Gastrocnemius medialis (tissue), 4 donors: ENCODE measurements at regions of chr12 and their contacts with region 1.

Region 1: DNA sequence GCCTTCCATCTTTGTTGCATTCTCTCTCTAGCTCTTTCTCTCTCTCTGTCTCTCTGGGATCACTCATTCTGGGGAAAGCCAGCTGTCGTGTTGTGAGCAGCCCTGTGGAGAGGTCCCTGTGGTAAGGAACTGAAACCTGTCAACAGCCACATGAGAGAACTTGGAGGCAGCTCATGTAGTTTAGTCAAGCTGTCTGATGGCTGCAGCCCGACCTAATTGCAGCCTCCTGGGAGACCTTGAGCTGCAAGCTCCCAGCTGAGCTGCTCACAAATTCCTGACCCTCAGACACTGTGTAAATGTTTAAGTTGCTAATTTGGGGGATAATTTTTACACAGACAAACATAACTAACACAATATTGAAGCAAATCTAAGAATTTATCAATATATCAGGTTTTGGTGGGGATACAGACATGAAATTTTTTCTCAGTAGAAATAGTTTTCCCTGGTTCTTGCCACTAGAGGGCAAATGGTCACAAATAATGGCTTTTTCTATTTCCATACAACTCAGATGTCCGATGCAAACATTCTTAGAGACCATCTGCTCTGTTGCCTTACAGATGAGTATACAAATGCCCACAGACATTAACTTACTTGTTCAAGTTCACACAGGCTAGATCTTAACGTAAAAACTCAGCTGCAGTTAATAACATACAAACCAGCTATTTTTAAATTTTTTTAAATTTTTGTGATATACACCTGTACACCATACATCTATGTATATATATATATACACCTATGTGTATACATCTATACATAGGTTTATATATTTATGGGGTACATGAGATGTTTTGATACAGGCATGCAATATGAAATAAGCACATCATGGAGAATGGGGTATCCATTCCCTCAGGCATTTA is 15.5 kb upstream of the KRR1 start:
- DNase-seq: no peak
- ATAC-seq: no peak
- H3K4me3 ChIP-seq: no peak overlapping the region
- H3K27ac ChIP-seq: no peak overlapping the region
- H3K4me1 ChIP-seq: no peaks in the 10 kb centered on the region
- H3K27me3 ChIP-seq: no peaks in the 10 kb centered on the region
- CTCF ChIP-seq: peak; percentile 25 to 61 (median 46)
- POLR2A ChIP-seq: no peak

Region 2: DNA sequence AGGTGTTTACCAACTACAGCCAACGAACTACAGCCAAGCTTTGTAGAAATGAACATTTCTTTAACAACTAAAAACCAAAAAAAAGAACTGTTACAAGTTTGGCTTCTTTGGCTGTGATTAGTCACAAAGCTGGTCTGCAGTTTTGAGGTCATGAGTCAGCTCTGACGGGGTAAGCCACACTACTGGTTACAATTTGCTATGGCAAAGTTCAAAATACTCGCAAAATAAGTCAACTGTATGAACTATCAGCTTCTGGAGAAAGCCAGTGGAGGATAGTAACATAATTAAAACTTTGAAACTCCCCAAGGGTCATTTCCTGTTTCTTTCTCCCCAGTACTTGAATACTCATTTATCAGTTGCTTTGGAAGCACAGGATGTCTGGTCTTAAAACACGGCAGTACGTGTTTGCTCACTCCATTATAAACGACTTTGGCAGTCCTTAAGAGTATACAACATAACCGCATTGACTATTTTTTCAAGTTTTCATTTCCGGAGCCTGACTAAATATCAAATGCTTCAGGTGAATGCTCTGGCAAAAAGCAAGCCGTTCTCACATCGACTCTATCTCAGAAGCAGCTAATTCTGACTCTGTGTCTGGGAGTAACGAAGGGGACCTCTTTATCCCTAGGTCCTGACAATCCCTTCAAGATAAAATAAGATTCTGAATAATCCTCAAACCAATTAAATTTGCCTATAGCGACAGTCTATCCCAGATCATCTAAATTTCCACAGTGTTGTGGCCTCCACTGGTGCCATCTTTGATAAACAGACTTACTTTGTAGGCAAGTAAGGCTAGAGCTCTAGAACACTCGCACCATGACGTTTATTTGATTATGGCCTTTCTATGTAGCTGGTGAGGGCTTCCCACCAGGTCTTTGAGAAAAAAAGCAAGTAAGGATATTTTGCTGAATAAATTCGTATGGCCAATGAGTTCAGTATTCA is 494.1 kb after region 1 on chr12:
- in situ Hi-C with region 1: loop called in 2 of 4 experiments (anchors 10 to 25 kb)
- intact Hi-C with region 1: no loop called
- DNase-seq: no peak
- ATAC-seq: peak; percentile 34 to 39
- H3K4me3 ChIP-seq: no peak overlapping the region
- H3K27ac ChIP-seq: peak overlapping the region in 1 of 4 donors; percentile 25
- H3K4me1 ChIP-seq: no peaks in the 10 kb centered on the region
- H3K27me3 ChIP-seq: no peaks in the 10 kb centered on the region
- CTCF ChIP-seq: no peak
- POLR2A ChIP-seq: no peak

Region 3: GRCh38 chr12:76037130-76038103 is 510.5 kb after region 1 on chr12:
- in situ Hi-C with region 1: loop called in 3 of 4 experiments (anchors 5 to 25 kb)
- intact Hi-C with region 1: loop called (anchors 2 kb)
- DNase-seq: no peak
- ATAC-seq: peak; percentile 54 to 72
- H3K4me3 ChIP-seq: no peak overlapping the region
- H3K27ac ChIP-seq: no peak overlapping the region
- H3K4me1 ChIP-seq: peaks cover 8 to 11% of the 10 kb centered on the region in 2 donors
- H3K27me3 ChIP-seq: no peaks in the 10 kb centered on the region
- CTCF ChIP-seq: peak; percentile 52 to 78 (median 68)
- POLR2A ChIP-seq: no peak

Region 4: DNA sequence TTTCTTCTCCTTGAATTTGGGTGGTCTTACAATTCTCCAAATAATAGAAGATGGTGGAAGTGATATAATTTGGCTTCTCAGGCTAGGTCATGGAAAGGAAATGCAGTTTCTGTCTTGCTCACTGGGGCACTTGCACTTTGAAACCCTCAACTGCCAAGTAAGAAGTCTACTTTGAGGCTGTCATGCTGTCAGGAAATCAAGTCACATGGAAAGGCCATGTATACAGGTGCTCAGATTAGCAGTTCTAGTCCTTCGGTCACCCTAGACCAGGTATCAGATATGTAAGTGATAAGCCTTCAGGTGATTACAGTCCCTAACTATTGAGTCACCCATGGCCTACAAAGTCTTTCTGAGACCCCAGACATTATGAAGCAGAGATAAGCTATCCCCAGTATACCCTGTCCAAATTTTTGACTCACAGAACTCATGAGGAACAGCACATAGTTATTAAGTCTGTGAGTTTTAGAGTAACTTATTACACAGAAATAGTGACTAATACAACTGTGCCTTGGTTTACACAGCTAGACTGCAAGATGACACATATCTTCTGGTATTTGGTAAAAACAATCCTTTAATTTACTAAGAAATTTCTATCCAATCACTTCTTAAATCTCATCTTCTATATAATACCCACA is 847.6 kb after region 1 on chr12:
- in situ Hi-C with region 1: loop called in 2 of 4 experiments (anchors 25 kb)
- intact Hi-C with region 1: no loop called
- DNase-seq: no peak
- ATAC-seq: no peak
- H3K4me3 ChIP-seq: no peak overlapping the region
- H3K27ac ChIP-seq: no peak overlapping the region
- H3K4me1 ChIP-seq: no peaks in the 10 kb centered on the region
- H3K27me3 ChIP-seq: no peaks in the 10 kb centered on the region
- CTCF ChIP-seq: no peak
- POLR2A ChIP-seq: no peak